GM13976 (cell line): ENCODE measurements at regions of chr17 and their contacts with region 1.

Region 1: DNA sequence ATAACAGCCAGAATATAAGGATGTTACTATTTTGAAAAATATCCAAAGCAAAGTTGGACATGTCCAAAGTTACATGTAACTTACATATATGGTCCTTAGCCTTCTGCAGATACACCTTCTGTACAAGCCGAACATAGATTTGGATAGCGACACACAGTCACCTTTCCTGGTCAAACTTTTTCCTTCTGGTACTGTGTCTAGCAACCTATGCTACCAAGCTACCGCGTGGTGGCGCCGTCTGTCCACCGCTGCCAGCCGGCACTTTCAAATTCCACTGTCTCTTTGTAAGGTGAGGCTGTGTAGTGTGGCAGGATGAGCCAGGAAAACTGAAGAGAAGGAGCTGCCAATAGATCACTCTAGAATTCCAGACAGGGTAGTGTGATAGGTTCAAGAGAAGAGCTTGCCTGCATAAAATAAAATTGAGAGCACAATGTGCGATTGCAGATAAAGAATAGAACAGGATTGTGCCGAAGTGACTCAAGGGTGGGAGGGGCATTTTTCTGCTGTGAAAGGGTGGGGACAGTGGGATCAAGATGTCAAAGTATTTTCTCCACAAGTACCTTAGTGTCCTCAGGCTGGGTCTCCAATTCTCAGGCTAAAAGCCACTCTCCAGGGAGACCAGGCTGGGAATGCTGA is 366.9 kb downstream of the SLC39A11 start:
- DNase-seq: peak; percentile 55
- CTCF ChIP-seq: peak; percentile 72

Region 2: DNA sequence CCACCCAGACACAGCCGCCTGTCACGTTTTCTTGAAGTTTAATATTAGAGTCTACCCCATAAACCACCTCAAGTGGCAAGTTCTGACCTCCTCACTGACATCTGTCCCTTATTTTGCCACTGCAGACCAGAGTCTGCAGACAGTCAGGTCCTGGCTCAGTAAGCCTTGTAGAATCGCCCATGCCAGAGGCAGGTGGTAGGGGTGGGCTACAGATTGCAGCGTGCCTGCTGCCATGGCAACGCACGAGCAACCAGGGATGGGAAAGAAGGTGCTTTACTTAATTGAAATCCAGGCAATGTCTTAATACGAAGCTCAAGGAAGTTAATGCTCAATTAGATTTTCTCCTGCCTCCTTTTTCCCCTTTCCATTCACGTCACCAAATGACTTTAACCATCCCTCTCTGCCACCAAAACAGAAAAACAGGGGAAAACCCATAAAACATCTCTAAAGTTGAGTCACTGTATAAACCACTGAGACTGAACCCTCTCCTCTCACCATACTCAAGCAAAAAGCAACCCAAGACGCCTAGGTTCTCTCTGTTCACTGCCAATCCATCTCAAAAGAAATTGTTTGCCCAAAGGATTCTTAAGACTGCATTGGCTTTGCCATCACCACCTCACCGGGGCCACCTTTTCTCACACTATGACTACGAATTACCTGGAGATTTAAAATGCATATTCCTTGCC is 138.1 kb after region 1 on chr17:
- in situ Hi-C with region 1: no loop called
- DNase-seq: peak; percentile 46
- CTCF ChIP-seq: no peak

Region 3: GRCh38 chr17:72922219-72922618 is 196.7 kb after region 1 on chr17:
- in situ Hi-C with region 1: no loop called
- DNase-seq: no peak
- CTCF ChIP-seq: no peak

Region 4: DNA sequence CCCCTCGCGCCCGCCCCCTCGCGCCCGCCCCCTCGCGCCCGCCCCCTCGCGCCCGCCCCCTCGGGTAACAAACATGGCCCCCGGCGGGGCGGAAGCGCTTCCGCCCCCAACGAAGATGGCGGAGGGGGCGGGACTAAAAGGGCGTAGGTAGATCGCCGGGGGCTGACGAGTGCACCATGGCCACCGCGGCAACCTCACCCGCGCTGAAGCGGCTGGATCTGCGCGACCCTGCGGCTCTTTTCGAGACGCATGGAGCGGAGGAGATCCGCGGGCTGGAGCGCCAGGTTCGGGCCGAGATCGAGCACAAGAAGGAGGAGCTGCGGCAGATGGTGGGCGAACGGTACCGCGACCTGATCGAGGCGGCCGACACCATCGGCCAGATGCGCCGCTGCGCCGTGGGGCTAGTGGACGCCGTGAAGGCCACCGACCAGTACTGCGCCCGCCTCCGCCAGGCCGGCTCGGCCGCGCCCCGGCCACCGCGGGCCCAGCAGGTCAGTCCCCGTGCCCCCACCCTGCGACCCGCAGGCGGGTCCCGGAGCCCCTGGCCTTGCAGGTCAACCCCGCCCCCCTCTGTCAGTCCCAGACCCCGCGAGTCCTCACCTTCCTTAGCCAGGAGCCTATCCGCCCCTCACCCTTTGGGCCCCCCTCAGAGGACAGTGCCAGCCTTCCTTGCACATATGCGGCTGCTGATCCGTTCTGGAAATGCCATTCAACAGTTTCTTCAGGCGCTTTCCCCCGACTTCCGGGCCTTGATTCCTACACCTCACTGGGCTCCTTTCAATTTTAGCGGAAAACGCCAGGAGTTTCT is 467.5 kb after region 1 on chr17 and contains the start of gene COG1:
- in situ Hi-C with region 1: loop called (anchors 10 kb)
- DNase-seq: peak; percentile 97
- CTCF ChIP-seq: no peak

Region 5: GRCh38 chr17:73255671-73256181 is 530.2 kb after region 1 on chr17:
- in situ Hi-C with region 1: loop called (anchors 10 kb)
- DNase-seq: peak; percentile 78
- CTCF ChIP-seq: peak; percentile 96

Region 6: DNA sequence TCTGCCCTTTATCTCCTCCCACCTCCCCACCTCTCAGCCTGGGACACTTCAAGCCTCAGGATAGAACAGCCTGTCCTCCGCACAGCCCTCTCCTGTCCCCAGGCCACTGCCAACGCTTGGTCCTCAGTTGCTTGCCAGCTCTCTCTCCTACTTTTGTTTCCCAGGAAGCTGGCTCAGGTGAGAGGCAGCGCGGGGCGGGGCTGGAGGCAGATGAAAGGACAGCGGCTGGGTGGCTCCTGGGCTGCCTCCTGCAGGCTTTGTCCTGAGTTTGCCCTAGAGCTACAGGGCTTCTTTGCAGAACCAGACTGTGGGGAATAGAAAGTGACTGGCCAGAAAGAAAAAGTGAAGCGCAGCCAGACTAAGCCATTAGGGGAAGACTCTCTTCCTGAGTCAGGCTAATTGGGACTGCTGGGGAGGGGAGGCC is 634.4 kb after region 1 on chr17:
- in situ Hi-C with region 1: loop called (anchors 25 kb)
- DNase-seq: no peak
- CTCF ChIP-seq: no peak